Left cardiac atrium (tissue), 4 donors: ENCODE measurements at regions of chr1 and their contacts with region 1.

Region 1: DNA sequence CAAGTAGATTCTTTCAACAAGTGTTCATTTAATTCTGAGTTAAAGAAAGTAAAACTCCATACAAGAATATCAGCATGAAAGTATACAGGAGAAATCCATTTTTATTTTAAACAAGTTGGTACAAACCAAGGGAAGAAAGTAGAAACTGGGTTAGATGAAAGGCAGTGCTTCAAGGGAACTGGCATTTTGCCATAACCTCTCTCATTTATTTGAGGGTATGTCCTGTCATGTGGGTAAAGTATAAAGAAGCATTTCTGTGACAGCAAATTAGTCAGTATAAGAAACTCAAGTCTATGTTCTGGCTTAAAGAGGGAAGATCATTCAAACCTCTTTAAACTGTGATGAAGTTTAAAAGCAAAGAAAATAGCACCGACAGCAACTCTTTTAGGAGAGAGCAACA is 32.0 kb downstream of the OLFM3 start:
- DNase-seq: no peak
- ATAC-seq: no peak

Region 2: GRCh38 chr1:101820071-101820470 is 144.6 kb before region 1 on chr1:
- intact Hi-C with region 1: loop called in 1 of 2 experiments (anchors 10 kb)
- DNase-seq: no peak
- ATAC-seq: peak; percentile 50 to 67